ENCODE measurements at regions of chr6 and their contacts with region 1.

Region 1: GRCh38 chr6:140833408-140833807 is 1299.3 kb upstream of the GJE1 start:
- DNase-seq: no peak
- ATAC-seq: no peak
- H3K4me3 ChIP-seq: no peak overlapping the region
- H3K27ac ChIP-seq: no peak overlapping the region
- H3K4me1 ChIP-seq: no peaks in the 10 kb centered on the region
- H3K27me3 ChIP-seq: no peaks in the 10 kb centered on the region
- CTCF ChIP-seq: no peak

Region 2: GRCh38 chr6:140480852-140481251 is 352.6 kb before region 1 on chr6:
- CTCF ChIA-PET with region 1: no interaction called
- POLR2A ChIA-PET with region 1: no interaction called
- in situ Hi-C with region 1: no loop called
- intact Hi-C with region 1: no loop called
- DNase-seq: no peak
- ATAC-seq: no peak
- H3K4me3 ChIP-seq: no peak overlapping the region
- H3K27ac ChIP-seq: peak overlapping the region; percentile 25; the same call in 1 of the 2 replicates
- H3K4me1 ChIP-seq: peaks cover 4% of the 10 kb centered on the region; the same call in 1 of the 2 replicates
- H3K27me3 ChIP-seq: no peaks in the 10 kb centered on the region
- CTCF ChIP-seq: no peak

Region 3: DNA sequence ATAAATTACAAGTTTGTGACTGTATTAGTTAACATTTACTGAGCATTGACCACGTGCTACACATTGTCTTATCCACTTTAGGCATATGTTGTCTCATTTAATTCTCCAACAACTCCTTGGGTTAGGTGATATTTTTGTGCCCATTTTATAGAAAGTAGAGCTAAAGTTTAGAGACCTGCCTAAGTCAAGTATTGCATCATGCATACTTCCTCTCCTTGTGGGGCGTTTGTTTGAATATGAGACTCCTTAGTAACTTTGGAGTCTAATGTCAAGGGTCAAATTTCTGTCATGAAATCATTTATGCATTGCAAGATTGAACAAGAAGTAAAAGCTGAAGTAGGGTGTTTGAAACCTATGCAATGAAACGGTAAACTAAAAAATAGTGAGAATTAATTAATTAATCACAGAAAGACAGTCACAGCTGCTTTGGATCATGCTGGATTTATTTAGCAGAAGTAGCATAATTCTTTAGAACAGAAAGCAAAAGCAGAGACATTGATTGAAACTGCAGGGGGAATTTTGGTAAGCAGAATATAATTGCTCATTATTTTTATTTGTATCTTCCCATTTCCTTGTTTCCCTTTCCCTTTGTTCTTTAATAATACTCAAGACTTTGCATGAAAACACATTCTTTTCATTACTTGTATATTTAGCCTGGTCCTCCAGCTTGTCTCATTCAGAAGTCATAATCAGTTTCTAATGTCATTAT is 75.1 kb before region 1 on chr6:
- CTCF ChIA-PET with region 1: no interaction called
- POLR2A ChIA-PET with region 1: no interaction called
- in situ Hi-C with region 1: loop called (anchors 10 kb)
- intact Hi-C with region 1: no loop called
- DNase-seq: no peak
- ATAC-seq: no peak
- H3K4me3 ChIP-seq: no peak overlapping the region
- H3K27ac ChIP-seq: no peak overlapping the region
- H3K4me1 ChIP-seq: no peaks in the 10 kb centered on the region
- H3K27me3 ChIP-seq: no peaks in the 10 kb centered on the region
- CTCF ChIP-seq: no peak

Region 4: GRCh38 chr6:140940251-140940925 is 107.0 kb after region 1 on chr6:
- CTCF ChIA-PET with region 1: no interaction called
- POLR2A ChIA-PET with region 1: no interaction called
- in situ Hi-C with region 1: no loop called
- intact Hi-C with region 1: no loop called
- DNase-seq: no peak
- ATAC-seq: no peak
- H3K4me3 ChIP-seq: no peak overlapping the region
- H3K27ac ChIP-seq: no peak overlapping the region
- H3K4me1 ChIP-seq: no peaks in the 10 kb centered on the region
- H3K27me3 ChIP-seq: no peaks in the 10 kb centered on the region
- CTCF ChIP-seq: no peak

Measured in Panc1 (cell line).